Head of caudate nucleus (tissue), 42 donors: ENCODE measurements at regions of chr21 and their contacts with region 1.

Region 1: GRCh38 chr21:33025489-33026442 is at the start of gene OLIG2:
- DNase-seq: peak; percentile 88 to 99 (median 96)

Region 2: GRCh38 chr21:31983120-31983519 is 1042.6 kb before region 1 on chr21:
- intact Hi-C with region 1: no loop called
- DNase-seq: no peak

Region 3: DNA sequence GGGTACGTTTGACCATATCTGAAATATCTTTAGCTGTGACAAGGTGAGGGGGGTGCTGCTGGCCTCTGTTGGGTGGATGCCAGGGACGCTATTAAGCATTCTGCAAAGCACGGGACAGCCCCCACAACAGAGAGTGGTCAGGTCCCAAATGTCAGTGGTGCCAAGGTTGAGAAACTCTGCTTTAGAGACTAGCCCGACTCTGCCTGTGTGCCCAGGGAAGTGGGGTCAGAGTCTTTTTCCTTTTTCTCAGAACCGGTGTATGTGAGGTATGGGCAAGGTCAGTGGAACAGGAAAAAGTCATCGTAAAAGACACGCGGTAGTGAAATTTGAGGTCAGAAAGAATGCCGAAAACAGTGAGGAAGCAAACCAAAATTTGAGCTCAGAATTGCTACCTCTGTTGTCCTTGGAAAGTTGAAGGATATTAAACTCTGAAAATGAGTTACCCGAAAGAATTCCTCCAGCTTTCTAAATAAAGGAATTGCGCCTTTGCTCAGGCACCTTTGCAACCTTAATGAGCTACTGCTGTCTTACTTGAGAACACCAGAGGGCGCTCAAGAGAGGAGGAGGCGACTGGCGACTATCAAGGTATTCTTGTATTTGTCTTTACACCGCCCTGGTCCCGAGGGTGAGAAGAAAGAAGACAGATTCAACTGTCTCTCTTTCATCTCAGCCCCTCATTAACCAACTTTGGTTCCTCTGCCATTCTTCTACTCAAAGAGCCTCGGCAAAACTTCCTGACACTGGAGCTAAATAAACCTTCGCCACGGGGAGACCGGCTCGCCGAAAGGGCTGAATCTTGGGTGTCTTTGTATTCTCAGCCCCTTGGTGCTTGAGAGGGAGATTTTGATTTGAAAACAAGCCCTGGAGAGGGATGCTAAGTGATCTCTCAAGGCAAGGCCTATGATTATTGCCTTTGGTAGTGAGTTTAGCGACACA is 85.4 kb before region 1 on chr21:
- intact Hi-C with region 1: loop called (anchors 10 kb)
- DNase-seq: peak in 40 of 42 donors; percentile 19 to 86 (median 56)

Region 4: DNA sequence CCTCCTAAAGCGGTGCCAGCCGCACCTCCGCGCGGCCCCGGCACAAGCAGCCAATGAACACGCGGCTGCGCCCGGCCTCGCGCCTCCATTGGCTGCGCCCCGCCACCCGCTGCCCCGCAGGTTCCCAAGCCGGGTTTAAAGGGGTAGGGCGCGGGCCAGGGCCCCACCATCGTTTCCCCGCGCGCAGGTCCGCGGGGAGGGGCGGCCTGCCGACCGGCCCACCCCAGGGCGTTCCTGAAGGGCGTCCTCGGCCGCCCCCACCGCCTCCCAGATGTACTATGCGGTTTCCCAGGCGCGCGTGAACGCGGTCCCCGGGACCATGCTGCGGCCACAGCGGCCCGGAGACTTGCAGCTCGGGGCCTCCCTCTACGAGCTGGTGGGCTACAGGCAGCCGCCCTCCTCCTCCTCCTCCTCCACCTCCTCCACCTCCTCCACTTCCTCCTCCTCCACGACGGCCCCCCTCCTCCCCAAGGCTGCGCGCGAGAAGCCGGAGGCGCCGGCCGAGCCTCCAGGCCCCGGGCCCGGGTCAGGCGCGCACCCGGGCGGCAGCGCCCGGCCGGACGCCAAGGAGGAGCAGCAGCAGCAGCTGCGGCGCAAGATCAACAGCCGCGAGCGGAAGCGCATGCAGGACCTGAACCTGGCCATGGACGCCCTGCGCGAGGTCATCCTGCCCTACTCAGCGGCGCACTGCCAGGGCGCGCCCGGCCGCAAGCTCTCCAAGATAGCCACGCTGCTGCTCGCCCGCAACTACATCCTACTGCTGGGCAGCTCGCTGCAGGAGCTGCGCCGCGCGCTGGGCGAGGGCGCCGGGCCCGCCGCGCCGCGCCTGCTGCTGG is 44.4 kb after region 1 on chr21 and contains the start of gene OLIG1:
- intact Hi-C with region 1: loop called (anchors 2 kb)
- DNase-seq: peak; percentile 64 to 95 (median 85)

Region 5: DNA sequence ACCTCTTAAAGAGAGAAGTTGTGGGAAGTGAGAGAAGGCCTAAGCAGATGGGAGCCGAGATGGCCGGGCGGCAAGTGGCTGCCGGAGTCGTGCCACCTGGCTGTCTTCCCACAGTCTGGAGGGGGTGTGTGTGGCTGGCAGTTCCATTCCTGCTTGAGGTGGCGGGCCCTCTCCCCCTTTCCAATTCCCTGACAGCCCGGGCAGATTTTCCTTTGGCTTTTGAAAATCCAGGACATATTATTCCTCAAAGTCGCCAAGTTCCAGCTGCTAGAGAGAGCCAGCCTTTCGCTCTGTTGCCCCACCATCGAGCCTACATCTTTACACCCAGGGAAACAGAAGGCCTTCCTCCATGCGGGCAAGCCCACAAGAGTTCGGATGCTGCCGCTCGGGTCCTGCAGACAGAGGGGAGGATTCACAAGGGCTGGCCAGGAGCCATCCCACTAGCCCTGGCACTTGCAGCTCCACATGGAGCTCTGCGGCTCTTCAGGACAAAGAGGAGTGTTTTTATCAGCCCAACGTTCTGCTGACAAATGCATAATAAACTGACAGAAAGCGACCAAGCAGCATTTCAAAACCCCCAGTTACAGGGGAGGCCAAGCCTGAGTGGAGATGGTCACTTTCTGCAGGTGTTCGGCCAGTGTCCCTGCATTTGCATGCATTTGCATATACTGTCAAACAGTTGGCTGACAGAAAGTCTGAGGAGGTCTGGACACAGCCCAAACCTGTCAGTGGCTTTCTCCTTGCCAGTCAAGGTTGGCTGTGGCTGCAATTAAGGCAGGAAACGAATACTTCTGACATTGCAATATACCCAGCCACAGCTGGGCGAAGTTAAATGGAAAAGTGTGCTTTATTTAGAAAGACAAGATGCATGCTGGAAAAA is 90.1 kb after region 1 on chr21:
- intact Hi-C with region 1: loop called (anchors 2 kb)
- DNase-seq: peak; percentile 73 to 94 (median 87)